H1 (cell line): ENCODE measurements at regions of chr11 and their contacts with region 1.

Region 1: DNA sequence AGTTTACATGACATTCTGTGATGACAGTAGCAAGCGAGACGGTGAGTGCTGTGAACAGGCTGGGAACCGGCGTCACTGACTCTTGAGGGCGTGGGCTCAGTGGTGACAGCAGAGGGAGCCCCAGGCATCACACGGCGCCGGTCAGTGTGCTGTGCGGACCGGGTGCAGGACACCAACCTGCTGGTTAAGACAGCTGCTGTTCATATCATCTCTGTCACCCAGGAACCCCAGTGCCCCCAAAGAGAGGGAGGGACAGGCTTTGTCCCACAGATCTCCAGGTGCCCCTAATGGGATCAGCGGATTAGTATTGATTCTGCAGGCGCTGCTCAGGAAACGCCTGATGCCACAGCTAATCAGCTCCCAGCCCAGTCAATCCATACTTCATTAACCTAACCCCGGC is 18.4 kb downstream of the B3GAT1 start:
- DNase-seq: no peak
- H3K4me3 ChIP-seq: no peak overlapping the region
- H3K27ac ChIP-seq: no peak overlapping the region
- H3K4me1 ChIP-seq: peaks cover 0 to 3% (median 0%) of the 10 kb centered on the region in 4 experiments; a peak in 1 of 7 replicates
- H3K27me3 ChIP-seq: no peaks in the 10 kb centered on the region
- CTCF ChIP-seq: peak; percentile 48 to 71 (median 64)
- EP300 ChIP-seq: no peak
- POLR2A ChIP-seq: no peak
- RAD21 ChIP-seq: peak; percentile 48 to 71

Region 2: GRCh38 chr11:134372964-134373363 is 20.7 kb before region 1 on chr11:
- CTCF ChIA-PET with region 1: interaction called, 17 read pairs
- POLR2A ChIA-PET with region 1: no interaction called
- DNase-seq: no peak
- H3K4me3 ChIP-seq: no peak overlapping the region
- H3K27ac ChIP-seq: no peak overlapping the region
- H3K4me1 ChIP-seq: peaks cover 2 to 18% (median 4%) of the 10 kb centered on the region in 4 experiments; a peak in 3 of 7 replicates
- H3K27me3 ChIP-seq: no peaks in the 10 kb centered on the region
- CTCF ChIP-seq: no peak
- EP300 ChIP-seq: no peak
- POLR2A ChIP-seq: no peak
- RAD21 ChIP-seq: no peak

Region 3: GRCh38 chr11:134407321-134407828 is 13.7 kb after region 1 on chr11:
- CTCF ChIA-PET with region 1: interaction called, 14 read pairs
- POLR2A ChIA-PET with region 1: interaction called, 3 read pairs
- DNase-seq: no peak
- H3K4me3 ChIP-seq: no peak overlapping the region
- H3K27ac ChIP-seq: no peak overlapping the region
- H3K4me1 ChIP-seq: peaks cover 4 to 16% (median 11%) of the 10 kb centered on the region in 4 experiments; a peak in 6 of 7 replicates
- H3K27me3 ChIP-seq: peaks cover 0 to 3% (median 1%) of the 10 kb centered on the region in 4 experiments; a peak in 2 of 7 replicates
- CTCF ChIP-seq: no peak
- EP300 ChIP-seq: no peak
- POLR2A ChIP-seq: no peak
- RAD21 ChIP-seq: no peak

Region 4: GRCh38 chr11:134449713-134450112 is 56.1 kb after region 1 on chr11:
- CTCF ChIA-PET with region 1: interaction called, 10 read pairs
- POLR2A ChIA-PET with region 1: no interaction called
- DNase-seq: peak; percentile 46 to 65
- H3K4me3 ChIP-seq: no peak overlapping the region
- H3K27ac ChIP-seq: no peak overlapping the region
- H3K4me1 ChIP-seq: 0 out of 7 replicates have a peak, but pooled peaks cover 0 to 2% (median 0%) of the 10 kb centered on the region in 4 experiments
- H3K27me3 ChIP-seq: no peaks in the 10 kb centered on the region
- CTCF ChIP-seq: peak; percentile 88 to 99 (median 90)
- EP300 ChIP-seq: no peak
- POLR2A ChIP-seq: no peak
- RAD21 ChIP-seq: peak; percentile 76 to 84

Region 5: DNA sequence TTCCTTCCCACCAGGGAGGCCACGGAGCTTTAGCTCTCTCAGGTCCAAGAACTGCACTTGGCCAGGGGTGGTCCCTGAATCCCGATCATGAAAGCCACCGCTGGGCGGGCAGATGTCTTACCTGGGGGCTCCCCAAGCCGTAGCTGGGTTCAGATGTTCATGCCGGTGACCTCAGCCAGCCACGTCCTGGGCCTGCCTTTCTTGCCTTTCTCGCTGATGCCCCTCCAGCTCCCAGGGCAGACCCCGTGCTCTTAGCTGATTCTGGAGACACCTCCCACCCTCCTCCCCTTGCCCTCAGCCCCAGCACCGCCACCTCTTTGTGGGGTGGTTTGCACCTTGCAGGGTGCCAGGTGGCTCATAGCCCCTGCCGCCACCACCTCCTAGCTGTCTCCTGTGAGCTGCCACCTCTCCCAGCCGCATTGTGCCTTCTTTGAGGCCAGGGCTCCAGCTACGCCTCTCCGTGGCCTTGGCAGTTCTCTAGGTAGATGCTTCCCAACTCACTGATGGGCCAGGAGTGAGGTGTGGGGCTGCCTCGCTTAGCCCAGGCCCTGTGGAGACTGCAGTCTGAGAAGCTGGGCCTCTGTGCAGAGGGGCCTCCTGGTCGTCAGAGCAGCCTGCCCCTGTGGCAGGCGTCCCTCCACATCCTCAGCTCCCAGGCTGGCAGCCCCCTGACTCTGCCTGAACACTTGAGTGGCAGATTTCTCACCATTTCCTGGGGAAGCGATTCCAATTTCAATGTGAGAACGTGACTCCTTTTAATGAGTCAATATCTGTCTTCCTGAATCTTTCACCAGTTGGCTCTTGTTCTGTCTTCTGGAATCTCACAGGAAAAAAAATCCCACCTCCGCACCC is 116.0 kb after region 1 on chr11:
- CTCF ChIA-PET with region 1: no interaction called
- POLR2A ChIA-PET with region 1: no interaction called
- DNase-seq: no peak
- H3K4me3 ChIP-seq: no peak overlapping the region
- H3K27ac ChIP-seq: no peak overlapping the region
- H3K4me1 ChIP-seq: no peaks in the 10 kb centered on the region; a peak in 1 of 7 replicates
- H3K27me3 ChIP-seq: peaks cover 0 to 12% (median 0%) of the 10 kb centered on the region in 4 experiments; a peak in 2 of 7 replicates
- CTCF ChIP-seq: no peak
- EP300 ChIP-seq: no peak
- POLR2A ChIP-seq: no peak
- RAD21 ChIP-seq: no peak